ENCODE measurements at regions of chr4 and their contacts with region 1.

Region 1: DNA sequence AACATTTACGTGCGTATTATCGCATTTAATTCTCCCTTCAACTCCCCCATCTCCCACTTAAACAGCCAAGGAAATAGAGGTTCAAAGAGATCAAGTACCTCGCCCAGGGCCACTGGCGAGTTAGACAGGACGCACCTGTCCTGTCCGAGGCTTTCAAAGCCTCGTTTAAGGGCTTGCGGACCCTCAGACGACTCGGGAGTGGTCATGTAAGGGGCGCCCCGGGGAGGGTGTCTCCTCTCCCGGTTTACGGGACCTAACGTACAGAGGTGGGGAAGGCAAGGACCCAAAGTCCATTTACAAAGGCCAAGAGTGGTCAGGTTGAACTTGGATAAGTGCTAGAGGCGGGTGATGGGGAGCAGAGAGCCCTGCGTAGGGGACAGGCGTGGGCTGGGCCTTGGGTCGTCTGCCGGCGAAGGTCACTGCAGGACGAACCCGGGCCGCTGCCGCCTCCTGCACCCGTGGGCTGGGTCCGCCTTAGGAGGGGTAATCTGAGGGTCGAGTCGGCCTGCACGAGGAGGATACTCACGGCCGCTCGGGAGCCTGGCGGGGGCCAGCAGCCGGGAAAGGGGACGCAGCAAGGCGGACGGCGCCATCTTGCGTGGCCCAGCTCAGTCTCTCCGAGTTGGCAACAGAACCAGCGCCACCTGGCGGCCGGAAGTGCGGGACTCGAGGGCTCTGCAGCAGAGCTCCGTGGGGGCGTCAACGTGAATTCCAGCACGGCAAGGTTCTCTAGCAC is 5.9 kb upstream of the NAA15 start:
- DNase-seq: peak; percentile 100
- ATAC-seq: peak; percentile 98

Region 2: GRCh38 chr4:139028191-139028682 is 267.1 kb before region 1 on chr4:
- intact Hi-C with region 1: loop called (anchors 10 kb)
- DNase-seq: no peak
- ATAC-seq: no peak

Region 3: GRCh38 chr4:139083956-139084803 is 211.2 kb before region 1 on chr4:
- intact Hi-C with region 1: loop called (anchors 10 kb)
- DNase-seq: peak; percentile 91
- ATAC-seq: peak; percentile 83

Measured in sciatic nerve (tissue), 2 donors.